GM18951 (cell line): ENCODE measurements at regions of chr12 and their contacts with region 1.

Region 1: DNA sequence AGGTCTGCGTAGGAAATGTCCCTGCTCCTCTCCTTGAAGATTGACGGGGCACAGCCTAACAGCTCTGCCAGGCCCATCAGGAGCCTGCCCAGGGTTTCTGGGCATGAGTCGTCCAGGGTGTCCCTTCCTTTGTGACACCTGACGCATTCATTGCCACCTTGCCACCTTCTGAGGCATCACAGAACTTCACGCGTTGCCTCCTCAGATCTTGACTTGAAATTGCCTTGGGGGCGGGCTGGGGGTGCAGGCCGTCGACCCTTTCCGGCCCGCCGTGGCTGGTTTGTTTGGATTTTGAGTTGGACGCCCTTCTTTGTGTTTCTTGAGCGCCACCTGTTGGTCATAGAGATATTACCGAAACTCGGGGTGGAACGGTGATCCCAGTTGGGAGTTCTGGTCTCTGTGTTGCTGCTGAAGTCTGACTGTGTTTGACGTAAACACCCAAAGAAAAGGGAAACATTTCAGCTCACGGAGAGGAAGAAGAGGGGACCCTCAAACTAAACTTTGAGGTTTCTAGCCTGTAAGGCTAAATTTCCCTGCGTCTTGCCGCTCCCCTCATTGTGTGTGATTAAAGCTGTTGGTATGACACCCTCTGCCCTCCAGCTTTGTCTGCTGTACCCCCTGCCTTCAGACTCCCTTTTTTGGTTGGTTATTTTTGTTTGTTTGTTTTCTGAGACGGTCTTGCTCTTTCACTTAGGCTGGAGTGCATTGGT is 44.6 kb downstream of the MLXIP start:
- POLR2A ChIP-seq: no peak

Region 2: DNA sequence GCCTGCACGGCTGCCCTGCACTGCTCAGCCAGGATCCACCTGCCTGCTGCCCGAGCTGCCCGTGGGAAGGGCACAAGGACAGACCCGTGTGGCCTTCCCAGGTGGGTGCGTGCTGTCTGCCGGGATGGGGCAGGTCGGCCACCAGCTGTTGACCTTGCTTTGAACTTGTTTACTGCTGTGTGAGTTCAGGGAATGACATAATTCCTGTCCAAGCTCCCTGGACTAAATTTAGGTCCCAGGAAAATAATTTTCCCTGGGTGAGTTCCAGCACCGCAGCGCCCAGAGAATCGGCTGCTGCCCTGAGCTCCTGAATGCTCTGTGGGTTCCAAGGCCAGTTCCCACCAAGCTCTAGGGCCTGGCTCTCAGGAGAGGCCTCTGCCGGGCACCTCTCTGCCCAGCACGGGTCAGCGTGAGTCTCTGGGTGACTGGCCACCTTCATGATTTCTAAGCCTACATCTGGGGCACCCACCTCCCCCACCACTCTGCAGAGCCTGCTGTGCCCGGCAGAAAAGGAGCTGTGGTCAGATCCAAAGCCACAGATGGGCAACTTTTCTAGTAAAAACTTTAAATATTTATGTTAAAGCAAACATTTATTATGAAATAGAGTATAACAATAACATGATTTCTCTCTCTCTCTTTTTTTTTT is 71.9 kb before region 1 on chr12:
- in situ Hi-C with region 1: loop called (anchors 5 kb)
- POLR2A ChIP-seq: no peak

Region 3: GRCh38 chr12:122366685-122367475 is 243.7 kb after region 1 on chr12:
- in situ Hi-C with region 1: loop called (anchors 10 kb)
- POLR2A ChIP-seq: no peak